ENCODE measurements at regions of chr4 and their contacts with region 1.

Region 1: GRCh38 chr4:55089916-55090315 is 35.5 kb downstream of the KDR start:
- DNase-seq: no peak
- ATAC-seq: peak in 1 of 2 donors; percentile 18

Region 2: DNA sequence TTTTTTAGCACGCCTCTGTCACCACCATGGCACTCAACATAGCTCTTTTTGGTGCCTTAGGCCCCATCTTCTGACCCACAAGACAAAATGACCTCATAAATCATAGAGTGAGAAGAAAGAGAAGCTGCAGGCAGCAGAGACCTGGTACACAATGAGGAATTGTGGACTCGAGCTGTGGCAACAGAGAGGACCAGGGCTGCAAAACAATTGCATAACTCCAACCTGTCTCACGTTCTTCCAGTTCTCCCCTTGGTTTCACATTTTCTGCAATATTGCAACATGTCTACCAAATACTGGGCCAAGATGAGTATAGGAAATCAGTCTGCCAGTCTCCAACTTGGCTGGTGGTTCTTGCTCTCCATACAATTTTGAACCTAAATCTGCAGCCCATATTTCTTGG is 69.8 kb before region 1 on chr4:
- intact Hi-C with region 1: loop called in 1 of 2 experiments (anchors 10 kb)
- DNase-seq: no peak
- ATAC-seq: no peak

Measured in left cardiac atrium (tissue), 4 donors.